MCF 10A (cell line): ENCODE measurements at regions of chr4 and their contacts with region 1.

Region 1: DNA sequence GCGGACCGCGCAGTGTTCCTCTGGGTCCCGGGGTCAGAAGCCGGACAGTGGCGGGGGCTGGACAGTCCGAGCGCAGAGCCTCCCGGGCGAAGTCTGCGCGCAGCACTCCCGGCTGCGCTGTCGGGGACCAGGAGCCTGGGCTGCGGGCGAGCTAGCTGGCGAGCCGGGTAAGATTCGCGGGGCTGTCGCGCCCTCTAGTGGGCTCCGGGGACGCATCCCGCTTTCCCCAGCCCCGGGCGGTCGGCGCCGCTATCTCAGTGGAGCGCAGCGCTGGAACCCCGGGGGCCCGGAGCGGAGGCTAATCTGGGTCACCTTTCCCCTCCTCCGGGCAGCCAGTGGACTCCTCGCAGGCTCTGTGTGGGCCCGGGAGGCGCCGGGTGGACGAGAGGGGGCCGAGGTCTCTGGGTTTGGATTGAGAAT is 4.2 kb downstream of the PDGFRA start:
- DNase-seq: peak; percentile 83
- H3K4me3 Mint-ChIP-seq: peak overlapping the region; percentile 70
- H3K27ac Mint-ChIP-seq: no peak overlapping the region
- H3K4me1 Mint-ChIP-seq: peaks cover 11% of the 10 kb centered on the region
- H3K27me3 Mint-ChIP-seq: peaks cover 26% of the 10 kb centered on the region
- CTCF ChIP-seq: peak; percentile 74

Region 2: DNA sequence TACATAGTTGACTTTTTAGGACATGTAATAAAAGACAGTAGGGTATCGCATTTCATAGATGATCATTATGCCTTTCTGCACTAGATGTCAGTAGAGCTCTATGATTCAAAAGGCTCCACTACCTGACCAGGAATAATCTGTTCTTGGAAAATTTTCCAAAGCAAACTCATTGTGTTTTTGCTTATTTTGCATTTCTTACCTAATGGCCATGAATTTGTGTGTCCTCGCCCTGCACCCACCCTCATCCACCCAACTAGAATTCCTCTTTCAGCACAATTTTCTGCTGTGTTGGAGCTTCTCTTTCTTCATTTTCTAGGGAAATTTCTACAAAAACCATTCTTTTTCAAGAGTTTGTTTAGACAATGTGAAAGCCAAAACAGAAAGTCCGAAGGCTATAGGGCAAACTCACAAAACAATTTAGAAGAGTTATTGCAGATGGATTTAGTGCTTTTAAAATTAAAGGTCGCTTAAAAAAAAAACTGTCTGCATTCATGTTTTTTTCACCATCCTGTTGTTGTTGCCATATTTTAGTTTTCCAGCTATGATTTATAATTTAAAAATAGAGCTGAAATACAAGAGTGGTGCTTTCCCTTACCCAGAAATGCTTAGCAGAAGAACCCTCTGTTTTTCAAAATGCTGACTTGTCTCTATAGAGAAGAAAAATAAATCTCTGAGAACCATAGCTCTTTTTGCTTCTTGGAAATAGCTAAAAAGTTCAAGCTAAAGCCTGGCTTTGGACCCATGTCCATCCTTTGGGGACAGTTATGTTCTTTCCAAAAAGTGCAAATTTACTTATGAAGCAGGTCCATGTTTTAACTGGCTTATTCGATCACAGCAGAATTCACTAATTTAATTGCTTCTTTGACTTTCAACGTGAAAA is 1998.5 kb before region 1 on chr4:
- CTCF ChIA-PET with region 1: interaction called, 4 read pairs
- POLR2A ChIA-PET with region 1: no interaction called
- intact Hi-C with region 1: loop called (anchors 1 kb)
- DNase-seq: peak; percentile 69
- H3K4me3 Mint-ChIP-seq: no peak overlapping the region
- H3K27ac Mint-ChIP-seq: no peak overlapping the region
- H3K4me1 Mint-ChIP-seq: no peaks in the 10 kb centered on the region
- H3K27me3 Mint-ChIP-seq: peaks cover 12% of the 10 kb centered on the region
- CTCF ChIP-seq: peak; percentile 69

Region 3: GRCh38 chr4:52983563-52984303 is 1249.6 kb before region 1 on chr4:
- CTCF ChIA-PET with region 1: interaction called, 19 read pairs
- POLR2A ChIA-PET with region 1: interaction called, 3 read pairs
- intact Hi-C with region 1: loop called (anchors 1 kb)
- DNase-seq: peak; percentile 77
- H3K4me3 Mint-ChIP-seq: no peak overlapping the region
- H3K27ac Mint-ChIP-seq: no peak overlapping the region
- H3K4me1 Mint-ChIP-seq: no peaks in the 10 kb centered on the region
- H3K27me3 Mint-ChIP-seq: no peaks in the 10 kb centered on the region
- CTCF ChIP-seq: peak; percentile 50

Region 4: DNA sequence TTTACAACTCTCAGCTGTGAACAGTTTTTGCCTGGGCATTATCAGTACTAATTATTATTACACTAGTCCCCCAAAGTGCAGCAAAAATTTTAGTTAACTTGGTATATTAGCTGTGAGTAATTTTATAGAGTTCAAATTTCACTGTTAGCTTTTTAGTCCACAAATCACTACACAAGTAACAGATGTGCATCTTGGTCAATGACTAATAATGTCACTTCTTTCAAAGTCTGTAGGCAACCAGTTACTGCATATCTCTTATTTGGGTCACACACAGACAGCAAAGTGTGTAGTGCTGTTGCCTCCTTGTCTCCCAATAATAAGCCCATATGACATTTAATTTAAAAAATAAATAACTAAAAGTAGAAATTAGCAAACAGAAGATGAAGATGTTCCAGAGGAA is 1027.3 kb before region 1 on chr4:
- CTCF ChIA-PET with region 1: interaction called, 10 read pairs
- POLR2A ChIA-PET with region 1: no interaction called
- intact Hi-C with region 1: no loop called
- DNase-seq: no peak
- H3K4me3 Mint-ChIP-seq: no peak overlapping the region
- H3K27ac Mint-ChIP-seq: no peak overlapping the region
- H3K4me1 Mint-ChIP-seq: no peaks in the 10 kb centered on the region
- H3K27me3 Mint-ChIP-seq: no peaks in the 10 kb centered on the region
- CTCF ChIP-seq: no peak

Region 5: DNA sequence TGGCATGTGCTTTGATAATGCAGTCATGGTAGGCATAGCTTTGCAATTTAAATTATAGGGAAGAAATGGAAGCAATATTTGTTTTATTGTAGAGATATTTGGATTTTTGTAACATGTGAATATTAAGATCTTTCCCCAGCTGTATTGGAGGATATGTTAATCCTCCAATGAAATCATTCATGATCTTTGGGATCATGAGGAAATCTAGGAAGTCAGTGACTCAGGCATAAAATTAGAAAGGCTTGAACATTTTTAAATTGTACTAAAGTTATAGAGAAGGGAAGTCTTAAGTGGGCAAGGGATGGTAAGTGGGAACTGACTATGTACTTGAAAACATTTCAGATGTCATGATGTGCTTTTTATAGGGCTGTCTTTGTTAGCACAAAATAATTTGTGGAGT is 809.0 kb before region 1 on chr4:
- CTCF ChIA-PET with region 1: interaction called, 10 read pairs
- POLR2A ChIA-PET with region 1: no interaction called
- intact Hi-C with region 1: no loop called
- DNase-seq: no peak
- H3K4me3 Mint-ChIP-seq: no peak overlapping the region
- H3K27ac Mint-ChIP-seq: peak overlapping the region; percentile 11
- H3K4me1 Mint-ChIP-seq: no peaks in the 10 kb centered on the region
- H3K27me3 Mint-ChIP-seq: no peaks in the 10 kb centered on the region
- CTCF ChIP-seq: no peak

Region 6: GRCh38 chr4:53908661-53909078 is 324.6 kb before region 1 on chr4:
- CTCF ChIA-PET with region 1: interaction called, 101 read pairs
- POLR2A ChIA-PET with region 1: no interaction called
- intact Hi-C with region 1: loop called (anchors 1 kb)
- DNase-seq: peak; percentile 78
- H3K4me3 Mint-ChIP-seq: no peak overlapping the region
- H3K27ac Mint-ChIP-seq: no peak overlapping the region
- H3K4me1 Mint-ChIP-seq: peaks cover 27% of the 10 kb centered on the region
- H3K27me3 Mint-ChIP-seq: no peaks in the 10 kb centered on the region
- CTCF ChIP-seq: peak; percentile 66

Region 7: DNA sequence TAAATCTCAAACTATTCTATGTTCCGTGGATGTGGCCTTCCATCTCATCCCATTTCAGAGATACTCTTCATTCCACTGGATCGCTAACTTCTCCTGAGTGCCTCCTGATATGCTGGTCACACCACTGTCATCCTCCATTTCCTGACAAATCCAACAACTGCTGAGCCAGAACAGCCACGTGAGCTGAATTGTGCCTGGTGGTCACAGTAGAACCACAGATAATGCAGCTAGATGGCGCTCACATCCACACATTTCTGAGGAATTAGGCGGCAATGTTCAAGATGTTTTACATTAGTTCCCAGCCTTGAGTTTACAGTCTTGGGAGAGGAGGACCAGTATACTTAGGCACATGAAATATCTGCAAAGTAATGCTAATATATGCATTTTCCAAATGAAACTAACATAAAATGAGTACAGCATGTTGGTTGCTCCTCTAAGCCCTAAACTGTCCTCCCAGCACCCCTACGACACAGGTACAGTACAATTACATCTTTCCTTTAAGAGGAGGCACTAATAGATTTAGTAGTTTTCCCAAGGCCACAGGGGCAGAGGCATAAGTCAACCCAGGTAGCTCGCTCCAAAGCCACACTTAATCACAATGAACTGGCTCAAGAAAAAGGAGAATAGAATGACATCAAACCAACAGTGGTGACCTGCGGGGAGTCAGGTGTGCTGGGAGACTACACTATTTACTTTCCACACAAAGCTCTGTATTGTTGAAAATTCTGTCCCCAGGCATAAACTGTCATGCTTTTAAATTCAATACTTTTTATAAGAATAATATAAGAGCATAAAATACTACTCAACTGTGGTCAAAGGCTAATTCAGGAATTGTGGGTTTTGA is 303.1 kb before region 1 on chr4:
- CTCF ChIA-PET with region 1: interaction called, 33 read pairs
- POLR2A ChIA-PET with region 1: no interaction called
- intact Hi-C with region 1: no loop called
- DNase-seq: peak; percentile 83
- H3K4me3 Mint-ChIP-seq: no peak overlapping the region
- H3K27ac Mint-ChIP-seq: no peak overlapping the region
- H3K4me1 Mint-ChIP-seq: peaks cover 14% of the 10 kb centered on the region
- H3K27me3 Mint-ChIP-seq: no peaks in the 10 kb centered on the region
- CTCF ChIP-seq: peak; percentile 71

Region 8: DNA sequence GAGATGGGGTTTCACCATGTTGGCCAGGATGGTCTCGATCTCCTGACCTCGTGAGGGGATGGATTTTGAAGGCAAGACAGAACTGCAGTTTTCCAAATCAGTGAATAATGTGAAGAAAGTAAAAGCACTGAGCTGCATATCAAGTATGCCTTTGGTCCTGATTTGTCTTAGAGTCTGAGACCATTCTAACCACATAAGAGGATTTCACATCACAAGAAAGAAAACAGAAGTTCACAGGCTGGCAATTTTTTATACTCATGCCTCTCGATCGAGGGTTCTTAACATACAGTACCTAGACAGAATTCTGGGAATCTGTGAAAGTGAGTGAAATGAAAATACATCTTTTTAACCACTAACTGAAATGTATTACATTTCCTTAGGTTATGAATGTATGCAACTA is 192.2 kb before region 1 on chr4:
- CTCF ChIA-PET with region 1: no interaction called
- POLR2A ChIA-PET with region 1: no interaction called
- intact Hi-C with region 1: no loop called
- DNase-seq: no peak
- H3K4me3 Mint-ChIP-seq: no peak overlapping the region
- H3K27ac Mint-ChIP-seq: no peak overlapping the region
- H3K4me1 Mint-ChIP-seq: peaks cover 6% of the 10 kb centered on the region
- H3K27me3 Mint-ChIP-seq: no peaks in the 10 kb centered on the region
- CTCF ChIP-seq: no peak